ENCODE measurements at regions of chr11 and their contacts with region 1.

Region 1: DNA sequence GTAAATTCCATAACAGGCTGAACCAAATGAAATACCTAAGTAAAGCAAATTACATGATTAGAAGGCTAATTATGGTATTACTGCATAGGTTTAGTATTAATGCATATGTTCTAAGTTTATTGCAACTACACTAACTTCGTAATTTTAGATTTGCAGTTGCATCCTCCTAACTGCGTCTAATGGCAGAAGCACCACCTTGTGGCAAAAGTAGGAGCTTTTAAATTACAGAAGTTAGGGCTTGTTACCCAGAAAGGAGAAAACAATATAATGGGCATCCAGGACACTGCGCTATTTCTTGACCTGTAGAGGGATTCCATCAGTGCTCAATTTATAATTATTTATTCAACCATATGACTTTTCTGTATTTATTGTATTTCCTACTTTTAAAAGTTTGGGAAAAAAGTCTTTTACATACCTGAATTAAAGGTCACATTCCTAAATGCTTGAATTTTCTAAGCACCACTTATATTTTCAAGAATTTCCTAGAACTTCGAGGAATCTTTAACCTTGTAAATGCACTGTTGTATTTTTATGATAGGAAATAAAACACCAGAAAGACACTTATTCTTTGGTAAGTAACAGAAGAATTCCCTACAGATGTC is 16.3 kb upstream of the GPR83 start:
- DNase-seq: no peak
- H3K4me3 ChIP-seq: no peak overlapping the region
- H3K27ac ChIP-seq: no peak overlapping the region
- H3K4me1 ChIP-seq: no peaks in the 10 kb centered on the region
- H3K27me3 ChIP-seq: no peaks in the 10 kb centered on the region
- CTCF ChIP-seq: peak in 2 of 3 experiments; percentile 50 to 57; a peak in 3 of 4 replicates
- EP300 ChIP-seq: no peak
- POLR2A ChIP-seq: no peak
- RAD21 ChIP-seq: peak; percentile 70 to 74

Region 2: DNA sequence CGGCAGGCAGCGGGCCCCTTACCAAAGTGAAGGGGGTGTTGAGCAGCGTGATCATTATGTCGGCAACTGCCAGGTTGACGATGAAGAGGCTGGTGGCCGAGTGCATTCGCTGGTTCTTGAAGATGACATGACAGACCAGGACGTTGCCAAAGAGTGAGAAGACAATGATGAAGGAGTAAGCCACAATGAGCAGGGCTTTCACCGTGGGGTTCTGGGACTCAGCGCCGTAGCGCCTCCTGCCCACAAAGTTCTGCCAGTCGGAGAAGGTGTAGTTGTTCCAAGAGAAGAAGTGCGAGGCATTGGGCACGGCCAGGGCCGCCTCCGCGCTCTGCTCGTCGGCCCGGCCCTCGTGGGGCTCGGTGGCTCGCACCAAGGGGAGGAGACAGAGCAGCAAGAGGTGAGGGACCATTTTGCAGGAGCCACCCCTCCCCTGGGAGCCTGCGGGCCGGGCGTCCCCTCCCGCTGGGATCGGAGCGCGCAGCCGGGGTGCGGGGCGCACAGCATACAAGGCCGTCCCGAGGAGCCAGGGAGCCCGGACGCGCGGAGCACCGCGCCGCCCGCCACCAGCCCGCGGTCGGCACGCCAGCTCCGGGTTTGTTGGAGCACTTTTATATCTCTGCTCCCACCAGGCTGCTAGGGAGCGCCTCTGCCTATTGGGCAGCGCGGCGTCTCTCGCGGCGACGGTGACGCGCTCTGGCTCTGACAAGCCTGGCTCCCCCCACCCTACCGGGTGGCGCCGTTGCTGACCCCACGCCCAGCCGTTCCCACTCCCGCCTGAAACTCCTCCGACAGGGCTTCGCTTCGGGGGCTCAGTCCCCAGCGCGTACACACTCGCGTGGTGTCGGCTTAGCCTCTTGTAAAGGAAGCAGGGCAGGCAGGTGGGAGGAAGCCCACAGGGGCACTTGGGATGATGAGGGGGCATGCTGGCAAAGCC is 16.4 kb before region 1 on chr11 and contains the start of gene GPR83:
- CTCF ChIA-PET with region 1: interaction called, 36 read pairs
- POLR2A ChIA-PET with region 1: interaction called, 5 read pairs
- DNase-seq: peak in 1 of 2 experiments; percentile 59
- H3K4me3 ChIP-seq: peak within 1 kb of the TSS; percentile 32 to 66 (median 41)
- H3K27ac ChIP-seq: no peak within 1 kb of the TSS
- H3K4me1 ChIP-seq: peaks cover 0 to 2% (median 0%) of the 10 kb centered on the region in 4 experiments; a peak in 2 of 7 replicates
- H3K27me3 ChIP-seq: peaks cover 9 to 32% (median 29%) of the 10 kb centered on the region in 4 experiments
- CTCF ChIP-seq: peak in 1 of 3 experiments; percentile 3; a peak in 1 of 4 replicates
- EP300 ChIP-seq: no peak
- POLR2A ChIP-seq: peak in 1 of 2 experiments; percentile 62; a peak in 2 of 3 replicates
- RAD21 ChIP-seq: peak; percentile 10 to 21; a peak in 2 of 4 replicates
- total RNA-seq, gene GPR83: 1.3 and 1.5 TPM in 2 replicates